Activated naive CD4-positive, alpha-beta T cell treated with anti-CD3 and anti-CD28 coated beads for 36 hours (primary cell): ENCODE measurements at regions of chr7 and their contacts with region 1.

Region 1: DNA sequence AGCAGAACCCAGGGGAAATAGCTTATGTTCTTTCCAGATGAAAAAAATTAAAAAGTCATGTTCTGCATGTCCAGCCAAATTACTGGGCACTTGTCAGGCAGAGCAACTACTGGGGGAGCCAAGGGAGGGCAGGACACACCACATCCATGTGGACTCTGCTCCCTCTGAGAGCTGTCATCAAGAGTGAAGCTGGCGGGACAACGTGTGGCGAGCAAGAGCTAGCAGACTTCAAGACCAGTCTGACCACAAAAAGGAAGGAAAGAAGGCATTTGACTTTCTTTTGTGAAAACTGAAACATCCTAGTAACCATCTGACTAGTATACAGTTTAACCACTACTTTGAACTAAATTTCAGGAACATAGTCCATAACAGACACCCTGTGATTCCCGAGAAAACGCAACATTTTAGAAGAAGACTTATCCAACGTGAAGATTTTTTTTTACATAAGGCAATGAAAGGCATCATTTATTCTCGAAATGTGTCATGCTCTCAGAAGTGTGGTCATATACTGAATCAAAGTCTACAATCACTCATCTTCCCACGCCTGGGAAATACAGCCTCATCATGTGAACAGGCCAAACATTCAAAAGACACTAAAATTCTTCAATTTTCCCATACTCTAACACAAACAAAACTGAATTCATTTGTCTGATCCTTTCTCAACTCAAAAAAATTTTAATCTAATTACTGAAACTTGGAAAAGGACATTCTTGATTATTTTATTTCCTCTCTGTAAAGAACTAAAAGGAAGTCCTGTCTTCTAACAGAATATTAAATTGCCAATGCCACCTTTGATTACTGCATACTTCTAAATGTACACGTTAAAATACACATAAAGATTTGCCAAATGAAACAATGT is 15.5 kb downstream of the CYTH3 start:
- DNase-seq: peak; percentile 62
- H3K4me3 Mint-ChIP-seq: no peak overlapping the region
- H3K27ac Mint-ChIP-seq: no peak overlapping the region
- H3K4me1 Mint-ChIP-seq: peaks cover 29% of the 10 kb centered on the region
- H3K27me3 Mint-ChIP-seq: peaks cover 9% of the 10 kb centered on the region

Region 2: DNA sequence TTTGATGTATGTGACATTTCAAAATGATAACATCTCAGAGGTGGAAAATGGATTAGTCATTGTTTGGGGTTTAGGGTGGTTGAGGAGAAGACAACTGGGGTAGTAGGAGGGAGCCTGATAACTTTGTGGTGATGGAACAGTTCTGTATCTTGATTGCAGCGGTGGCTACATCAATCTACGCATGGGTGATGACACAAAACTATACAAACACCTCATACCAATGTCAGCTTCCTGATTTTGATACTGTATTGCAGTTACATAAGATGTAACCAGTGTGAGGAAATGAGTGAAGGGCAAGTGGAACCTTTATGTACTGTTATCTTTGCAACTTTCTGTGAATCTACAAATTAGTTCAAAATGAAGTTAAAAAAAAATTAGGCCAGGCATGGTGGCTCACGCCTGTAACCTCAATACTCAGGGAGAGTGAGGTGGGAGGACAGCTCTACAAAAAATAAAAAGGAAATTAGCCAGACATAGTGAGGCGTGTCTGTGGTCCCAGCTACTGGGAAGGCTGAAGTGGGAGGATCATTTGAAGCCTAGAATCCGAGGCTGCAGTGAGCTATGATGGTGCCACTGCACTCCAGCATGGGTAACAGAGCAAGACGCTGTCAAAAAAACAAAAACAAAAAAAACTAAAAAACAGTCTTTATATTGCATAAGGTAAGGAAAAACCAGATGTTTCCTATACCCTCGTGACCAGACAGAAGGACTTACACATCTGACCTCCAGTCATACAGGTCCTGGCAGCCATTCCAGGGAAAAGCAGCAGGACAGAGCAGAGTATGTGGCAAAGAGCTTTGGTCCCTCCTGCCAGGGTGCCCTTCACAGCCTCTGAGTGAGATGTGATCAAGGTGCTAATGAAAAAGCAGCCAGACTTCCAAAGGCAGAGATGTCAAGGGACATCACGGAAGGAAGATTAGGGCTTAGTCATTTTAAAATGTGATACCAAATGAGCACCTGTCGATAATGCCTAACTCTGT is 35.3 kb before region 1 on chr7:
- CTCF ChIA-PET with region 1: no interaction called
- intact Hi-C with region 1: loop called (anchors 1 kb)
- DNase-seq: peak; percentile 57
- H3K4me3 Mint-ChIP-seq: peak overlapping the region; percentile 3
- H3K27ac Mint-ChIP-seq: peak overlapping the region; percentile 55
- H3K4me1 Mint-ChIP-seq: peaks cover 17% of the 10 kb centered on the region
- H3K27me3 Mint-ChIP-seq: no peaks in the 10 kb centered on the region

Region 3: GRCh38 chr7:6276636-6277408 is 19.9 kb after region 1 on chr7:
- CTCF ChIA-PET with region 1: no interaction called
- intact Hi-C with region 1: no loop called
- DNase-seq: no peak
- H3K4me3 Mint-ChIP-seq: no peak overlapping the region
- H3K27ac Mint-ChIP-seq: no peak overlapping the region
- H3K4me1 Mint-ChIP-seq: peaks cover 3% of the 10 kb centered on the region
- H3K27me3 Mint-ChIP-seq: peaks cover 1% of the 10 kb centered on the region

Region 4: DNA sequence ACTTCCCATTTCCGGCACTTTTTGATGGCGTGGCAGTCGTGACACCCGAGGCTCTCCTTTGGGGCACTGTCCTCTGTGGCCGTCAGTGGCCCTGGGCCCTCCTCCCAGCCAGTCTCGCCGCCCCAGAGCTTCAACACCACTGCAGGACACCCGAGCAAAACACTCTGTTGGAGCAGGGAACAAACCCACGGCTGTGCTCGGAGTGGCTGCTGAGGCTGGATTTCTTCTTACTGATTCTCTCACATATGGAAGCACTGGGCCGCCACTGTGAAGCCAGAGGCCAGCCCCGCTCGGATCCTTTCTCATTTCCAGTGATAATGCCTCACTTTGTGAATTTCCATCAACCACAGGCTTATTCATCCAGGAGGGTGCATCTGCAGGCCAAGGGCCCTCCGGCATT is 73.8 kb after region 1 on chr7:
- CTCF ChIA-PET with region 1: no interaction called
- intact Hi-C with region 1: no loop called
- DNase-seq: no peak
- H3K4me3 Mint-ChIP-seq: no peak overlapping the region
- H3K27ac Mint-ChIP-seq: no peak overlapping the region
- H3K4me1 Mint-ChIP-seq: no peaks in the 10 kb centered on the region
- H3K27me3 Mint-ChIP-seq: no peaks in the 10 kb centered on the region

Region 5: DNA sequence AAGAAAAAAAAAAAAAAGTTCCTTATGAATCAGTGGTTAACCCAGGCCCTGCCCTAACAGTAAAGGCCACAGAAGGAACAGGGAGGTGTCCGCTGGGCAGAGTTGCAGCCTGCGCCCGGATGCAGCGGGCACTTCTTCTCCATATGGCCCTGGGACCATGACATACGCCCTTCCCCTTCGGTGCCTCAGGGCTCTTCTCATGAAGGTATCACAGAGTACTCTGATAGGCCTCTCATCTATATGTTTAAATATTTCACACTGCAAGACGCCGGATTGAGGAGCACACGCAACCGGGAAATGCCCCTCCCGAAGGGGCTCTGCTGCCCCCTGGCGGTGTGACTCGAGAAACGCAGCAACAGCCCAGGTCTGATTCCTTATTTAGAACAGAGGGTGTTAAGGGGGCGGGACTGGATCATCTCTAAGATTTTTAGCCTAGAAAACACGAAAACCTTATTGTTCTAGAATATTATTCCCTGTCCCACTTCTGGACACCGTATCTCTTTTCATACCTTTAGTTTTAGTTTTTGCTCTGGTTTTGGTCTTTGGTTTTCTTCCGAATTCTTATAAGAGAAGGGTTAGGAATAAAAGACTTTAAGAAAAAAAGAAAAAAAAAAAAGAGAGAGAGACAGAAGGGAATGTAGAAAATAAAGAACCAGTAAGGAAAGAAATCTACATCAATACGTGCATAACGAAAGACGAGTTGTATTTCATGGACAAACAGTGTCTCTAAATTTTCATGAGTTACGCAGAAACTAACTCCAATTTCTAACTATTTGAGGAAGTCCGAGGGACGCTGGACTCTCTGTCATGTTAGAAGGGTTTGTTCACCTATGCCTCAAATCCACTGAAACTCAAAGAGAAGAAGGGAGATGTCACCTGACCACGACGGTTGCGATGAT is 178.8 kb after region 1 on chr7:
- CTCF ChIA-PET with region 1: no interaction called
- intact Hi-C with region 1: loop called (anchors 5 kb)
- DNase-seq: peak; percentile 95
- H3K4me3 Mint-ChIP-seq: peak overlapping the region; percentile 58
- H3K27ac Mint-ChIP-seq: peak overlapping the region; percentile 78
- H3K4me1 Mint-ChIP-seq: peaks cover 43% of the 10 kb centered on the region
- H3K27me3 Mint-ChIP-seq: no peaks in the 10 kb centered on the region